ENCODE measurements at regions of chr5 and their contacts with region 1.

Region 1: DNA sequence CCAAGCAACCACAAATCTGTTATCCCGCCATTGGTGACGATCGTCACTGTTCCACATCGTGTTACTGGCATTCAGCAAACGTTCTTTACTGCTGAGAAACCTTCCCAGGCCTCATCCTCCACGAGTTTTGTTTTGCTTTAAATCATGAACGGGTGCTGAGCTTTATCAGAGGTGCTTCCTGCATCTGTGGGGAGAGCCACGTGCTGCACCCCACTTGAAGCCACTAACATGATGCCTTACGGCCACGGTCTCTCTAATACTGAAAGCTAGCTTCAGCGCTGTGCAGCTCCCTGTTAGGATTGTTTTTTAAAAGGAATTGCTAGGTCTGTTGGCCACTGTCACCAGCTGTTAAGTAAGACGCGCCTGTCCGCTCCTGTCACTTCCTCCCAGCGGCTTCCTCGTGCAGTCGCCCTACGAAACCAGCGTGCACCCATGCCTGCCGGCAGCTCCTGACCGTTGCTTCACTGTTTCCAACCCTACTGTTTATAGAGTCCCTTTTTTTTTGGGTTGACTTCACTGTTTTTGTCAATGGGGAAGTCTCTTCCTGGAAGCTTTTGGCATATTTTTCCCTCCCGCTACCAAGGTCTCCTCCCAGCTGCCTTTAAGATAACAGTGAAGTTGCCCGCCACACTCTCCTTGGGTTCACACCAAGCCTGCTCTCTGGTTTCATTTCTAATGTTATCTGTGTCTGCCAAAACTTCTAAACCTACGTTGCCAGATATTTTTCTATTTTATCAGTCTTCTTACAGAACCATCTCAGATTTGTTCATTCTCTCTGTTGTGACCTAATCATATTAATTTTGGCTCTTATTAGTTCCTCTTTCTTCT is 20.3 kb downstream of the LPCAT1 start:
- DNase-seq: peak in 1 of 2 donors; percentile 56
- ATAC-seq: peak in 1 of 4 donors; percentile 45
- H3K4me3 ChIP-seq: no peak overlapping the region
- H3K27ac ChIP-seq: no peak overlapping the region
- H3K4me1 ChIP-seq: peaks cover 11% of the 10 kb centered on the region
- H3K27me3 ChIP-seq: no peaks in the 10 kb centered on the region
- CTCF ChIP-seq: no peak

Region 2: GRCh38 chr5:1374680-1375055 is 128.8 kb before region 1 on chr5:
- intact Hi-C with region 1: no loop called
- DNase-seq: no peak
- ATAC-seq: no peak
- H3K4me3 ChIP-seq: no peak overlapping the region
- H3K27ac ChIP-seq: no peak overlapping the region
- H3K4me1 ChIP-seq: no peaks in the 10 kb centered on the region
- H3K27me3 ChIP-seq: peaks cover 0 to 20% (median 8%) of the 10 kb centered on the region in 3 donors
- CTCF ChIP-seq: no peak

Region 3: DNA sequence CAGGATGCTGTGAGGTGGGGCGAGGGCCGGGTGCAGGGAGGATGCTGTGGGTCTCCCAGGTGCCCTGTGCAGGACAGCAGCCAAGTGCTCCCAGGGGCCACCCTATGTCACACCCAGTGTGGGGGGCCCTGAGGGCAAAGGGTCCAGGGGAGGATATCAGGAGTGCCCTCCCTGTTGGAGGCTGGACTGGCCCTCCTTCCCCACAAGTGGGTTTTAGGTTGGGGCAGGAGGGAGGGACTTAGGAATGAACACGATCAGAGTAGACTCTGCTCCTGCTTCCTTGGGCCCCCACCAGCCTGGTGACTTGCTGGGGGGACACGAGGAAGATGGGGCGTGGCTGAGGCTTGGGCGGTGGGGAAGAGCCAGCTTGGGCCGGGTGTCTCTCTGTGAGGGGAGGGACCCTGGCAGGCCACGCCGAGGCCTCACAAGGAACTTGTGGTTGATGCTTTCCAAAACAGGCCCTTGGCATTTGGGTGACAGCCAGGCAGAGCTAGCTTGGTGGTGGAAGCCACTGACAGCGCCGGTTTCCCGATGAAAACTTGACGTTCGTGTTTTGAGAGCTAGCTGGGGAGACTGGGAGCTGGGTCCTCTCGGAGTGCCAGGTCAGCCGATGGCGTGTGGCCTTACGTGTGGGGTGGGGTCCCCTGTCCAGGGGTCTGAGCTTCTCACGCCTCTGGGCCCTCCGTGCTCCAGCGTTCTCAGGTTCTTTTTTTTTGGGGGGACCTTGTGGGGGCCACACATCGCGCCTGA is 149.3 kb after region 1 on chr5:
- intact Hi-C with region 1: no loop called
- DNase-seq: peak in 1 of 2 donors; percentile 47
- ATAC-seq: no peak
- H3K4me3 ChIP-seq: no peak overlapping the region
- H3K27ac ChIP-seq: no peak overlapping the region
- H3K4me1 ChIP-seq: no peaks in the 10 kb centered on the region
- H3K27me3 ChIP-seq: peaks cover 0 to 79% (median 20%) of the 10 kb centered on the region in 3 donors
- CTCF ChIP-seq: no peak

Region 4: GRCh38 chr5:2739360-2740050 is 1236.0 kb after region 1 on chr5:
- intact Hi-C with region 1: loop called in 1 of 2 experiments (anchors 5 kb)
- DNase-seq: no peak
- ATAC-seq: no peak
- H3K4me3 ChIP-seq: peak overlapping the region; percentile 61
- H3K27ac ChIP-seq: no peak overlapping the region
- H3K4me1 ChIP-seq: no peaks in the 10 kb centered on the region
- H3K27me3 ChIP-seq: peaks cover 3 to 83% (median 26%) of the 10 kb centered on the region in 3 donors
- CTCF ChIP-seq: no peak

Measured in psoas muscle (tissue), 8 donors.